ENCODE measurements at regions of chr16 and their contacts with region 1.

Region 1: GRCh38 chr16:82302042-82302727 is 132.2 kb upstream of the MPHOSPH6 start:
- DNase-seq: no peak
- H3K4me3 ChIP-seq: no peak overlapping the region
- H3K27ac ChIP-seq: no peak overlapping the region
- H3K4me1 ChIP-seq: no peaks in the 10 kb centered on the region
- H3K27me3 ChIP-seq: peaks cover 3% of the 10 kb centered on the region
- CTCF ChIP-seq: no peak

Region 2: DNA sequence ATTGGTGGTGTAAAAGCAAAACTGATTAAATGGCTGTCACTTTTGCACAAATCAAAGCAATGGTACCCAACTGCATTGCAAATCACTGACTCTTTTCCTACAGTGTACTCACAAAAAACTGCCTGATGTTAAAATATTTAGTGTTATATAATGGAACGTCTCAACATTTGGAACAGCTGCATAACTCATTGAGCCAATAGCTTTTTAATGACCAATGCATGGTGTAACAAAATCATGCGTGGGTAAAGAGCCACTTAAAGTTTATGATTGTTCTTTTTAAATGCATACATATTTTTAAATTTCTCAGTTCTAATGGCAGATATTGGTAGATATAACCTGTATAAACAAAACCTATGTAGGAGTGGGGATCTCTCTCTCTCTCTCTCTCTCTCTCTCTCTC is 71.8 kb after region 1 on chr16:
- CTCF ChIA-PET with region 1: no interaction called
- dilution Hi-C with region 1: loop called (anchors 5 kb)
- in situ Hi-C with region 1: no loop called
- intact Hi-C with region 1: no loop called
- DNase-seq: no peak
- H3K4me3 ChIP-seq: no peak overlapping the region
- H3K27ac ChIP-seq: no peak overlapping the region
- H3K4me1 ChIP-seq: no peaks in the 10 kb centered on the region
- H3K27me3 ChIP-seq: peaks cover 7% of the 10 kb centered on the region
- CTCF ChIP-seq: no peak